ENCODE measurements at regions of chr6 and their contacts with region 1.

Region 1: GRCh38 chr6:28124102-28124970 is at the start of gene ZSCAN16:
- DNase-seq: peak; percentile 86
- ATAC-seq: peak; percentile 96
- H3K4me3 ChIP-seq: peak within 1 kb of the TSS; percentile 70 to 91 (median 75)
- H3K4me3 Mint-ChIP-seq: peak within 1 kb of the TSS; percentile 98
- H3K27ac ChIP-seq: peak within 1 kb of the TSS; percentile 68 to 74
- H3K27ac Mint-ChIP-seq: peak within 1 kb of the TSS; percentile 92
- H3K4me1 ChIP-seq: peaks cover 12 to 18% of the 10 kb centered on the region in 2 donors
- H3K4me1 Mint-ChIP-seq: peaks cover 31% of the 10 kb centered on the region
- H3K27me3 ChIP-seq: no peaks in the 10 kb centered on the region
- H3K27me3 Mint-ChIP-seq: no peaks in the 10 kb centered on the region
- CTCF ChIP-seq: no peak
- total RNA-seq, gene ZSCAN16: 15.4 and 15.8 TPM in 2 replicates

Region 2: DNA sequence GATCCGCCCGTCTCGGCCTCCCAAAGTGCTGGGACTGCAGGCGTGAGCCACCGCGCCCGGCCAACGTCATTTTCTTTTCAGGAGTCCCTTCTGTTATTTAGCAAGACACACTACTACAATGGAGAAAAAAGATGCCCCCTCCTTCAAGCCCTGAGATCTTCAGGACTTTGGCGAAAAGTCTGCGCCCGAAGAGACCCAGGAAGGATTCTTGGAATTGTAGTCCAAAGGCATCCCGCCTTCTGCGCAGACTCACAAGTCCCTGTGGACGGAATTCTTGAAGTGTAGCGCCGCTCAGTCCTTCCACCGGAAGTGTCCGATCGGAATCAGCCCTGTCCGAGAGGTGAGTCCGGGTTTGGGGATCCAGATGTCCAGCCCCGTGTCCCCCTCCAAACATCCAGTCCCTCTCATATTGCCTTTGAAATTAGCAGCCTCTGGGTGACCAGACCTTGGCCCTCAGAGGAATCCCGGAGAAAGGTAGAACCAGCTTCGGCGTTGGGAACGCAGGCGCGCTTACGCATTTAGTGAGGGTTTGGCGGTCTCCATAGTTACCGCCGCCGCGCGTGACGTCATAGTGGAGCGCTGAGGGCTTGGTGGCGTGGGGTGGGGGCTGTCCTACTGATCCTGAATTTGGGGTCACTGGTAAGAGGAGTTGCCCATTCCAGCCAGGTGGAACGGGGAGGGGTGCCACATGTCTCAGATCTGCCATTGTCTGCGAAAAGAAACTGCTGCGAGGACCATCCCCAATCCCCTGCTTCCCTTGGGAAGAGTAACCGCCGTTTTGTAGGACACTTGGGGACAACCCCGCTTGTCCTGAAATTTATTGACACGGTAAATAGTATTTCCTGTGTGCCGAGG is 43.5 kb before region 1 on chr6:
- CTCF ChIA-PET with region 1: no interaction called
- POLR2A ChIA-PET with region 1: interaction called, 3 read pairs
- intact Hi-C with region 1: loop called (anchors 1 kb)
- DNase-seq: peak; percentile 98
- ATAC-seq: peak; percentile 67
- H3K4me3 ChIP-seq: peak overlapping the region; percentile 67 to 96 (median 88)
- H3K4me3 Mint-ChIP-seq: peak overlapping the region; percentile 92
- H3K27ac ChIP-seq: peak overlapping the region; percentile 94 to 100
- H3K27ac Mint-ChIP-seq: peak overlapping the region; percentile 98
- H3K4me1 ChIP-seq: peaks cover 10 to 22% of the 10 kb centered on the region in 2 donors
- H3K4me1 Mint-ChIP-seq: peaks cover 36% of the 10 kb centered on the region
- H3K27me3 ChIP-seq: no peaks in the 10 kb centered on the region
- H3K27me3 Mint-ChIP-seq: no peaks in the 10 kb centered on the region
- CTCF ChIP-seq: no peak

Region 3: DNA sequence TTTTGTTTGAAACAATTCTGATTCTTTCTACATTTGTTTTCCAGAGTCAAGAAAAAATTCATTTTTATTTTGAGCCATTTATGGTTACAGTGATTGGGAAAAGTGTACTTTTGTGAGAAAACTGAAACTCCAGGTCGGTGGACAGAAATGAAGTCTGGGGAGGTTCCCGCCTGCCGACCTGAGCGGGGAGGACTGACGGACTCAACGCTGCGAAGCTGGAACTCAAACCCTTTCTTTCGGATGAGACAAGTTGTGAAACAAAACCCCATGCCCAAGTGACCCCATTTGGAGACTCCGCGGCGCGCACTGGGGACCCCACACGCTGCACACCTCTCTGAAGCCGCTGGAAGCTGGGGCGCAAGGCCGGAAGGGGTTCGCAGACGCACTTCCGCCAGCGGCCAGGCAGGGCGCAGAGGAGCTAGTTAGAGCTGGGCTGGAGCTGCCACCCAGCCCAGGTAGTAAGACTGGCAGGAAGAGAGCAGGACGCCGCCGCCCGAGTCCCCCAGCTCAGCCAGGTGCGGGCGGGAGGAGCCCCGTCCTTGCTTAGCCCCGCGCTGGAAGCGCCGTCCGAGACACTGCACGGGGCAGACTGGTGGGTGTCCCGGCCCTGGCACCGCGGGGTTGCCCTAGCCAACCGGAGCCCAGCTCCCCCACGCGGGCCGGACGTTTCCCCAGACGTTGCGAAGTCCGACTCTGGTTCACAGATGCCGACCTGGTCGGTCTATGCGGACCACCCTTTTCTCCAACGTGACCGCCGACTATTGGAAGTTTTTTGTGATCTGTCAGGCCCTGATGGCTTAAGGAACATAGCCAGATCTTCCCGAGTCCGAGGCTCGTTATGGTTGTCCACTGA is 19.7 kb before region 1 on chr6:
- CTCF ChIA-PET with region 1: interaction called, 5 read pairs
- POLR2A ChIA-PET with region 1: interaction called, 12 read pairs
- intact Hi-C with region 1: loop called (anchors 1 kb)
- DNase-seq: peak; percentile 92
- ATAC-seq: peak; percentile 97
- H3K4me3 ChIP-seq: peak overlapping the region; percentile 69 to 78 (median 74)
- H3K4me3 Mint-ChIP-seq: peak overlapping the region; percentile 95
- H3K27ac ChIP-seq: peak overlapping the region; percentile 87 to 93
- H3K27ac Mint-ChIP-seq: peak overlapping the region; percentile 96
- H3K4me1 ChIP-seq: peaks cover 5 to 7% of the 10 kb centered on the region in 2 donors
- H3K4me1 Mint-ChIP-seq: peaks cover 13% of the 10 kb centered on the region
- H3K27me3 ChIP-seq: no peaks in the 10 kb centered on the region
- H3K27me3 Mint-ChIP-seq: peaks cover 4% of the 10 kb centered on the region
- CTCF ChIP-seq: peak; percentile 79

Region 4: GRCh38 chr6:28161410-28162079 is 37.2 kb after region 1 on chr6:
- CTCF ChIA-PET with region 1: interaction called, 3 read pairs
- POLR2A ChIA-PET with region 1: interaction called, 3 read pairs
- intact Hi-C with region 1: loop called (anchors 1 kb)
- DNase-seq: peak; percentile 87
- ATAC-seq: peak; percentile 91
- H3K4me3 ChIP-seq: peak overlapping the region; percentile 34 to 58 (median 47)
- H3K4me3 Mint-ChIP-seq: peak overlapping the region; percentile 84
- H3K27ac ChIP-seq: no peak overlapping the region
- H3K27ac Mint-ChIP-seq: peak overlapping the region; percentile 57
- H3K4me1 ChIP-seq: peaks cover 9 to 12% of the 10 kb centered on the region in 2 donors
- H3K4me1 Mint-ChIP-seq: peaks cover 14% of the 10 kb centered on the region
- H3K27me3 ChIP-seq: no peaks in the 10 kb centered on the region
- H3K27me3 Mint-ChIP-seq: peaks cover 3% of the 10 kb centered on the region
- CTCF ChIP-seq: no peak

Region 5: GRCh38 chr6:28225056-28225834 is 100.9 kb after region 1 on chr6 and contains the start of gene ZSCAN9:
- CTCF ChIA-PET with region 1: no interaction called
- POLR2A ChIA-PET with region 1: no interaction called
- intact Hi-C with region 1: loop called (anchors 5 kb)
- DNase-seq: peak; percentile 80
- ATAC-seq: peak; percentile 95
- H3K4me3 ChIP-seq: peak within 1 kb of the TSS; percentile 77 to 90 (median 89)
- H3K4me3 Mint-ChIP-seq: peak within 1 kb of the TSS; percentile 98
- H3K27ac ChIP-seq: peak within 1 kb of the TSS; percentile 25 to 75
- H3K27ac Mint-ChIP-seq: peak within 1 kb of the TSS; percentile 89
- H3K4me1 ChIP-seq: peaks cover 10 to 15% of the 10 kb centered on the region in 2 donors
- H3K4me1 Mint-ChIP-seq: peaks cover 22% of the 10 kb centered on the region
- H3K27me3 ChIP-seq: peaks cover 0 to 18% (median 7%) of the 10 kb centered on the region in 4 experiments
- H3K27me3 Mint-ChIP-seq: peaks cover 18% of the 10 kb centered on the region
- CTCF ChIP-seq: no peak
- total RNA-seq, gene ZSCAN9: 29.8 and 32.0 TPM in 2 replicates

Region 6: DNA sequence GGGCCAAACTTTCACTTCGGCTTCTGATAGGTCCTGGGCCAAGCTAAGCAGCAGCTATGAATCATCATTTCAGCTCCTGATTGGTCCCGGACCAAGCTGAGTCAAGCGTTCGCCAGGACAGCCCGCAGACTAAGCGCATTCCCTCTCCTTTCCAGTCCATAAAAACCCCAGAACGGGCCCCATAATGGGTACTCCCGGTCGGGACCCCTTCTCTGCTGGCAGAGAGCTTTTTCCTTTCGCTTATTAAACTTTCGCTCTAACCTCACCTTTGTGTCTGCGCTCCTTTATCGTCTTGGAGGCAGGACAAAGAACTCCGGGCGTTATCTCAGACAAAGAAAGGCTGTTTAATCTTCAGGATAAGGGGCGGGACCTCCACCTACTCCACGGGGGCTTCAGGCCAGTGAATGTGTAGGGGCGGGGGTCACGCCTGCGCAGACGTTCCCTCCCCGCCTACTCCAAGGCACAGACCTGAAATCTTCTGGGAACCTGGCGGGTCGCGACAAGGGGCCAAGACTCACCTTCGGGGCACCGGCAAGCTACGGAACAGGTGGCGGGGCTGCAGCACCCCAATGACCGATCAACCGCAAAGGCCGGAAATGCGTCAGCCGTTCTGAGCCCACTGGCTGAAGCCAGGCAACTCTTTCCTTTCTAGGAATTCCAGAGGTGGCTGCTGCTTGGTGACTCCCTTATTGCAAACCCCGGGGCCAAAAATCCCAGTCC is 211.4 kb after region 1 on chr6 and contains the start of gene ZSCAN31:
- CTCF ChIA-PET with region 1: no interaction called
- POLR2A ChIA-PET with region 1: no interaction called
- intact Hi-C with region 1: no loop called
- DNase-seq: peak; percentile 89
- ATAC-seq: peak; percentile 87
- H3K4me3 ChIP-seq: peak within 1 kb of the TSS; percentile 72 to 98 (median 86)
- H3K4me3 Mint-ChIP-seq: no peak within 1 kb of the TSS
- H3K27ac ChIP-seq: peak within 1 kb of the TSS; percentile 95 to 96
- H3K27ac Mint-ChIP-seq: no peak within 1 kb of the TSS
- H3K4me1 ChIP-seq: peaks cover 11 to 18% of the 10 kb centered on the region in 2 donors
- H3K4me1 Mint-ChIP-seq: no peaks in the 10 kb centered on the region
- H3K27me3 ChIP-seq: no peaks in the 10 kb centered on the region
- H3K27me3 Mint-ChIP-seq: no peaks in the 10 kb centered on the region
- CTCF ChIP-seq: no peak
- total RNA-seq, gene ZSCAN31: 2.9 and 4.6 TPM in 2 replicates